Heart right ventricle (tissue), 16 donors: ENCODE measurements at regions of chr4 and their contacts with region 1.

Region 1: GRCh38 chr4:39823191-39823590 is 125.3 kb downstream of the UBE2K start:
- DNase-seq: no peak
- ATAC-seq: peak in 2 of 8 donors; percentile 34 to 48
- H3K4me3 ChIP-seq: no peak overlapping the region
- H3K27ac ChIP-seq: no peak overlapping the region
- H3K4me1 ChIP-seq: peaks cover 0 to 7% (median 0%) of the 10 kb centered on the region in 9 donors
- H3K27me3 ChIP-seq: no peaks in the 10 kb centered on the region
- CTCF ChIP-seq: no peak

Region 2: GRCh38 chr4:39255266-39255665 is 567.9 kb before region 1 on chr4:
- intact Hi-C with region 1: no loop called
- DNase-seq: no peak
- ATAC-seq: no peak
- H3K4me3 ChIP-seq: no peak overlapping the region
- H3K27ac ChIP-seq: no peak overlapping the region
- H3K4me1 ChIP-seq: no peaks in the 10 kb centered on the region
- H3K27me3 ChIP-seq: no peaks in the 10 kb centered on the region
- CTCF ChIP-seq: no peak

Region 3: GRCh38 chr4:39706334-39706733 is 116.9 kb before region 1 on chr4:
- intact Hi-C with region 1: loop called in 1 of 10 experiments (anchors 10 kb)
- DNase-seq: peak; percentile 27 to 54
- ATAC-seq: peak; percentile 56 to 92 (median 78)
- H3K4me3 ChIP-seq: no peak overlapping the region
- H3K27ac ChIP-seq: peak overlapping the region in 4 of 10 donors; percentile 22 to 64 (median 40)
- H3K4me1 ChIP-seq: peaks cover 0 to 51% (median 42%) of the 10 kb centered on the region in 9 donors
- H3K27me3 ChIP-seq: no peaks in the 10 kb centered on the region
- CTCF ChIP-seq: no peak

Region 4: GRCh38 chr4:39864403-39864802 is 41.2 kb after region 1 on chr4:
- intact Hi-C with region 1: no loop called
- DNase-seq: no peak
- ATAC-seq: no peak
- H3K4me3 ChIP-seq: no peak overlapping the region
- H3K27ac ChIP-seq: no peak overlapping the region
- H3K4me1 ChIP-seq: no peaks in the 10 kb centered on the region
- H3K27me3 ChIP-seq: no peaks in the 10 kb centered on the region
- CTCF ChIP-seq: no peak